ENCODE measurements at regions of chr4 and their contacts with region 1.

Region 1: DNA sequence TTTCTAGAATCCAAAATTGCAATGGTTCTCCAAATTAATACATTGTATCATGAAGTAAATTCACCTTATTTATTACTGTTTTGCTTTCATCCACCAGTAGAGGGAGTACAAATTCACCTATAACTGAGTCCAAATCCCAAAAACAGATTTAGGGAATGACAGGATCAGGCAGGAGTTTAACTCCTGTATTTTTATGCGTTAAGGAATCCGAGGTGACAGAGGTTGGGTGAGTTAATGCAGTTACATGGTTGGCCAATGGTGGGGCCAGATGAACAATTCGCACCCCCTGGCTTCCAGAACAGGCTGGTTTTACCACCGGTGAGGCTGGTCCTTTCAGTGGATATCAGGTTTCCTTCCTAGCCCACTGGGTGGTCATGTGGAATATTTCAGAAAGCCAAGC is 82.4 kb downstream of the MTNR1A start:
- DNase-seq: no peak
- ATAC-seq: no peak
- H3K4me3 ChIP-seq: no peak overlapping the region
- H3K27ac ChIP-seq: no peak overlapping the region
- H3K4me1 ChIP-seq: no peaks in the 10 kb centered on the region
- H3K27me3 ChIP-seq: peaks cover 0 to 23% (median 0%) of the 10 kb centered on the region in 7 donors
- CTCF ChIP-seq: peak; percentile 37 to 65 (median 58)

Region 2: DNA sequence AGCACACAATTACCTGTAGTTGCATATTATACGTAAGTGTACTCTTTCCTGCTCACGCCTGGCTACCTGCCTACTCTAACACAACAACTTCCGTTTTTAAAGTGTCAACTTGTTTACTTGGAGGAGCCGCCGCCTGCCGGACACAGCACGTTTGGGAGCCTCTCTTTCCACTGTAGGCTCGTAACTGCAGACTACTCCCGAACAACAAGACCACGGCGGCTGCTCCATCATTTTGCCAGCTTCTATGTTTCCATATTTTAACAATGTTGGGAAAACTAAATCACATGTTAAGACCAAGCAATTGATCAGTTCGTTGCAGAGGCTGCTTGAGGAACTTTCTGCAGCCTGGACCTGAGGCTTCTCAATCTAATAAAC is 81.6 kb after region 1 on chr4:
- intact Hi-C with region 1: no loop called
- DNase-seq: no peak
- ATAC-seq: no peak
- H3K4me3 ChIP-seq: peak overlapping the region in 5 of 10 donors; percentile 31 to 43 (median 34)
- H3K27ac ChIP-seq: no peak overlapping the region
- H3K4me1 ChIP-seq: peaks cover 0 to 11% (median 4%) of the 10 kb centered on the region in 9 donors
- H3K27me3 ChIP-seq: peaks cover 6 to 73% (median 63%) of the 10 kb centered on the region in 7 donors
- CTCF ChIP-seq: no peak

Region 3: GRCh38 chr4:186587416-186588018 is 114.6 kb after region 1 on chr4:
- intact Hi-C with region 1: loop called in 6 of 10 experiments (anchors 2 to 10 kb)
- DNase-seq: peak; percentile 62 to 63
- ATAC-seq: peak in 3 of 8 donors; percentile 61 to 75 (median 63)
- H3K4me3 ChIP-seq: no peak overlapping the region
- H3K27ac ChIP-seq: no peak overlapping the region
- H3K4me1 ChIP-seq: peaks cover 0 to 25% (median 6%) of the 10 kb centered on the region in 9 donors
- H3K27me3 ChIP-seq: no peaks in the 10 kb centered on the region
- CTCF ChIP-seq: peak; percentile 74 to 94 (median 92)

Region 4: DNA sequence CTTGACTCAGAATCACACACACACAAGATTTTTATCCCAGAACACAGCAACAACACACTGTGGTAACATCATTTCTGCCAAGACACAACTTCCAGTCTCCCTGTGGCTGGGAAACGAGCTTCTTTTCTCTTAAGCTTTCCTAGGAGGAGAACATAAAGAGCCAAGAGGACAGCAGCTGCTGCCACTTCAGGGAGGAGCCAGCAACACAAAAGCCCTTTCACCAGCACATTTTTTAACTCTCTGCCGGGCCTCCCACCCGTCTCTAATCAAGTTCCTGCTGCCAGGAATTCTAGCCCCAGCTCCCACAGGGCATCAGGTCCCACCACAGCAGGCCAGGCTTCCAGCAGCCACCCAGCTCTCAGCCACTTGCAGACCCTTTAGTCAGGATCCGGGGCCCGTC is 228.3 kb after region 1 on chr4:
- intact Hi-C with region 1: no loop called
- DNase-seq: peak in 1 of 2 donors; percentile 27
- ATAC-seq: peak; percentile 12 to 54 (median 42)
- H3K4me3 ChIP-seq: peak overlapping the region in 6 of 10 donors; percentile 10 to 35 (median 18)
- H3K27ac ChIP-seq: peak overlapping the region; percentile 61 to 90 (median 82)
- H3K4me1 ChIP-seq: peaks cover 2 to 79% (median 54%) of the 10 kb centered on the region in 9 donors
- H3K27me3 ChIP-seq: no peaks in the 10 kb centered on the region
- CTCF ChIP-seq: no peak

Measured in heart right ventricle (tissue), 16 donors.